GM12878 (cell line): ENCODE measurements at regions of chr7 and their contacts with region 1.

Region 1: DNA sequence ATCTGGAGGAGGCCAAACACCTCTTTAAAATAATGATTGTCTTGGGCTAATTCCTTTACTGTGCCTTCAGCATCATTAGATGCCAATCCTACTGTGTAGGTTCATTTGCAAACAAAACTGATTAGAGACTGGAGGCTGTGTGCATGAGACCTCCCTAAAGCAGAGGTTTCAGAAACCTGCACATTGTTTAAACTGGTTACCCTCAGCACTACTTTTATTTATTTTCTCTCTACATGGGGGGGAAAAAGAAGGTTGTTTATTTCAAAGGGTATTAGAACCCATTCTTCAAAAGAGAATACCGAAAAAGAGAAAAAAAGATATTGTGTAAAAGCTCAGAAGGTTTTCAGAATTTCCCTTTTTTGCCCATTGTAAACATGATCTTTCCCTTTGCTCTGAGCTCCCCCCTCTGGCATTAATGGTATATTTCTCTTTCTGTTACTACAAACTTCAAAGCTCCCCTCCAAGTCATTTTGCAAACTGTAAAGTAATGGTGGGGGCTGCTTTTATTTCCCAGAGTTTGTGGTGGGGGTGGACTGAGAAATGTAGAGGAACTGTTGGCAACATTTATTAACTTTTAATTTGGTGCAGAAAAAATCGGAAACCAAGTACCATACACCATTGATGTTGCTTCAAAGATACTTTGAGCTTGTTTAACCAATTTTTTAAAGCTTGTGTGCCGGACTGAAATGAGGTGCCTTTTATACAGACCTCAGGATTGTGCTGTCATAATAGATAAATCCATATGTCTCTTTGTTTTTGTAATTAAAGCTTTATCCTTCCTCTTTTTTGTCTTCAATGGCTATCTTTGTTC is 181.4 kb downstream of the EXOC4 start:
- DNase-seq: no peak
- ATAC-seq: peak; percentile 68
- H3K4me3 ChIP-seq: no peak overlapping the region
- H3K27ac ChIP-seq: no peak overlapping the region
- H3K4me1 ChIP-seq: no peaks in the 10 kb centered on the region
- H3K27me3 ChIP-seq: no peaks in the 10 kb centered on the region
- CTCF ChIP-seq: peak; percentile 34 to 67 (median 45); a peak in 5 of 6 replicates
- EP300 ChIP-seq: no peak
- POLR2A ChIP-seq: no peak
- RAD21 ChIP-seq: peak; percentile 87

Region 2: GRCh38 chr7:133230591-133231194 is 203.6 kb before region 1 on chr7:
- CTCF ChIA-PET with region 1: interaction called, 10 read pairs
- POLR2A ChIA-PET with region 1: no interaction called
- RAD21 ChIA-PET with region 1: no interaction called
- SMC1A ChIA-PET with region 1: interaction called, 3 read pairs
- in situ Hi-C with region 1: no loop called
- intact Hi-C with region 1: no loop called
- DNase-seq: no peak
- ATAC-seq: peak; percentile 71
- H3K4me3 ChIP-seq: no peak overlapping the region
- H3K27ac ChIP-seq: no peak overlapping the region
- H3K4me1 ChIP-seq: no peaks in the 10 kb centered on the region
- H3K27me3 ChIP-seq: peaks cover 0 to 4% of the 10 kb centered on the region in 2 experiments; a peak in 2 of 4 replicates
- CTCF ChIP-seq: peak; percentile 56 to 72 (median 61); a peak in 5 of 6 replicates
- EP300 ChIP-seq: no peak
- POLR2A ChIP-seq: no peak
- RAD21 ChIP-seq: peak; percentile 79

Region 3: GRCh38 chr7:133423618-133424017 is 10.6 kb before region 1 on chr7:
- CTCF ChIA-PET with region 1: interaction called, 13 read pairs
- POLR2A ChIA-PET with region 1: no interaction called
- RAD21 ChIA-PET with region 1: interaction called, 3 read pairs
- SMC1A ChIA-PET with region 1: interaction called, 6 read pairs
- in situ Hi-C with region 1: no loop called
- intact Hi-C with region 1: no loop called
- DNase-seq: no peak
- ATAC-seq: no peak
- H3K4me3 ChIP-seq: no peak overlapping the region
- H3K27ac ChIP-seq: no peak overlapping the region
- H3K4me1 ChIP-seq: no peaks in the 10 kb centered on the region
- H3K27me3 ChIP-seq: no peaks in the 10 kb centered on the region
- CTCF ChIP-seq: no peak
- EP300 ChIP-seq: no peak
- POLR2A ChIP-seq: no peak
- RAD21 ChIP-seq: no peak